ENCODE measurements at regions of chr2 and their contacts with region 1.

Region 1: DNA sequence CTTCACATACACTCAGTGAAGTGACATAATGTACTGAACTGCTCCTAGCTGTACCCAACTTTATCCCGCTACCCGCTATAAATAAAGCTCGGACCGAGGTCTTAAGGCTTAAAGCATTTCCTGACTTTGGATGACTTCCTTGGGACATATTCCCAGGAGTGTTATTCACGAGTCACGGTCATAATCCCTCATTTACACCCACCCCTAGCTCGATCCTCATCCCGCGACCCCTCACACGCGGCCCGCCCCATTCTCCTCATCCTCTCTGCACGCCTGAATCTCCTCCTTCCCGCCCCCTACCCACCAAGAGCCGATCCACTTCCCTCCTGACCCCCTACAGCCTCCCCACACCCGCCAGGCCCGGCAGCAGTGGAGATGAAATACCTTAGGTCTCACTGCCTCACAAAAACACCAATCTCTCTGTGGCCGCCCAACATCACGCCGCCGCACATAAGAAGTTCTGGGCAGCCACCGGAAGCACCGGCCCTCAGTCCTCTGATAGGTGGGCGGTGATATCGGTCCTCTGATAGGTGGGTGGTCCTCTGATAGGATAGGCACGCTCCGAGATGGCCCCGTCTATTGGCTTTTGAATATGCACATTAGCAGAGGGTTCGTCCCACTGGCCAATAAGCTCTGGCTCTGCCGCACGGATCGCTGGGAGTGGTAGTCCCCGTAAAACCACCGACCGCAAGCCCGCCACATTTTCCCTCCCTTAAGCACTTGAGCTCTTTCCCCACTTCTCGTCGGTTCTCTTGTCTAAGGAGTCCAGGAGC is at the start of gene WDCP:
- DNase-seq: peak; percentile 95 to 97
- ATAC-seq: peak; percentile 98
- H3K4me3 ChIP-seq: peak within 1 kb of the TSS; percentile 55 to 62
- H3K27ac ChIP-seq: peak within 1 kb of the TSS in 1 of 2 donors; percentile 69
- H3K4me1 ChIP-seq: no peaks in the 10 kb centered on the region
- H3K27me3 ChIP-seq: no peaks in the 10 kb centered on the region
- total RNA-seq, gene WDCP: 8.3 to 11.2 TPM

Region 2: GRCh38 chr2:22340716-22341115 is 1706.4 kb before region 1 on chr2:
- intact Hi-C with region 1: no loop called
- DNase-seq: no peak
- ATAC-seq: no peak
- H3K4me3 ChIP-seq: no peak overlapping the region
- H3K27ac ChIP-seq: no peak overlapping the region
- H3K4me1 ChIP-seq: no peaks in the 10 kb centered on the region
- H3K27me3 ChIP-seq: no peaks in the 10 kb centered on the region

Region 3: DNA sequence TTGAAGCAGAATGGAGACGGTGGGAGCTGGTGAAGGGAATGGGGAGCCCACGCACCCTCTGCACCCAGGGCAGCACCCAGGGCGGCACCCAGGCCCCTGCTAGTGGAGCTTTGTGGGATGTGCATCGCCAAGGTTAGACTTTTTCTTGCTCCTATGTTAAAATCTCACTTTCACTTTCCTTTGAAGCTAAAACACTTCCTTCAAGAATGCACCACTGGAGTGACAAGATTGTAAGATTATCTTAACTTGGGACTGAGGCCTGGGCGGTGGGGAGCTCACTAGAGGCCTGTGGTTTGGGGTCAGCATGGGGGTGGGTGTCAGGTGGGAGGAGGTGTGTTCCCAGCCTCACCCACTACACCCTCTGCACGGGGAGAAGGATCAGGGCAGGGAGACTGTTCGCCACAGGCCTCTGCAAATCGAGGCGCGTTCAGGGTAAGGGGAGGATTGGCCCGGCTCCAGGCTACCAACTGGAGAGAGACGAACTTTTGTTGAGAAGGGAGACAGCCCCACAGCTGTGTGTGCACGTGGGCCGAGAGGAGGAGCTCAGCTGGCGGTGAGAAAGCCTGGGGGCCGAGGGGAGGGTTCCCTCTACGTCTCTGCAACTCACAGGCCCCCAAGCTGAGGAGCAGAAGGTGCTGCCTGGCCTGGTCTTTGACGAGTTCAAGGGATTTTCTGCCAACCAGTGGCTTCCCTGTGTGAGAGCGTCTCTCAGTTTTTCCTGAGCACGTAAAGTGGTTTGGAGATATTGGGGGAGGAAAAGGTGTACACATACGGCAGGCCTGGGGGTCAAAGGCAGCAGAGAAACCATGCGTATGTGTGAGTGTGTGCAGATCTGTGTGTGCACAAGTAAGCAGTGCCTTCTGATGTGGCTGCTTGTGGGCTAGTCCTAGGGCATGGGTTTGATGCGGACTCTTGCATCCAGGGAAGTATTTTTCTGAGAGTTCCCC is 514.5 kb before region 1 on chr2:
- intact Hi-C with region 1: no loop called
- DNase-seq: no peak
- ATAC-seq: no peak
- H3K4me3 ChIP-seq: no peak overlapping the region
- H3K27ac ChIP-seq: no peak overlapping the region
- H3K4me1 ChIP-seq: no peaks in the 10 kb centered on the region
- H3K27me3 ChIP-seq: no peaks in the 10 kb centered on the region

Region 4: DNA sequence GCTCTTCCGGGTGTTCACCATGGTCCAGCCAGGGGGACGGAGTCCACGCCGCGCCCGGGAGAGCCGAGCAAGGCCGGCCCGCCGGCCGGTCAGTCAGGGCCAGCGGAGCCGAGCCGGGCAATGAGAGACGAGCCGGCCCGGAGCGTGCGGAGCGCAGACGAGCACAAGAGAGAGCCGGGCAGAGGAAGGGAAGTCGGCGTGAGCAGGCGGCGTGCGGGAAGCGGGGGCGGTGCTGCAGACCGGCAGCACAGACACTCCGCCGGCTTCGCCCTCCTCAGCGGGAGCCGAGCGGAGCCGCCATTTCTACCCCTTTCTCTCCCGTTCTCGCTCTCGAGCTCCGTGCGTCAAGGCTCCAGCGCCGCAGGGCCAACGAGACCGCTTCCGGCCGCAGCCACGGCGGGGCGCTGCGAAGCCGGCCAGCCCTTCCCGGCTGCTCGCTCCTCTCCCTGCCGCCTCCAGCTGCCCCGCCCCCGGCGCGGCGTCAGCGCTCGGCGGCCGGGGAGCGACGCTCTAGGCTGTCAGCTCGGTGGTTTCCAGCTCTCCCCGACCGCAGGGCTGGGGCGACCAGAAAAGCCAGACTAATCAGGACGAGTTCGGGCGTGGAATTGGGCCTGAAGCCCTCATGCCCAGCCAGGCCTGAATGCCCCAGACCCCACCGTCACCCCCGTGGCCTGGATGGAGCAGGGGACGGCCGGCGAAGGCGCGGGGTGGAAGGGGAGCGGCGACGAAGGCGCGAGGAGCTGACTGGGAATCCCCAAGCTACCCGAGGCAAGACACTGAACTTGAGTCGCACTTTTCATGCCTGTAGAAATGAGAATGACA is 120.2 kb before region 1 on chr2 and contains the start of gene ATAD2B:
- intact Hi-C with region 1: loop called (anchors 10 kb)
- DNase-seq: peak; percentile 93 to 97
- ATAC-seq: peak; percentile 98
- H3K4me3 ChIP-seq: peak within 1 kb of the TSS; percentile 86 to 92
- H3K27ac ChIP-seq: peak within 1 kb of the TSS; percentile 91 to 97
- H3K4me1 ChIP-seq: no peaks in the 10 kb centered on the region
- H3K27me3 ChIP-seq: no peaks in the 10 kb centered on the region
- total RNA-seq, gene ATAD2B: 33.4 to 45.8 TPM

Region 5: DNA sequence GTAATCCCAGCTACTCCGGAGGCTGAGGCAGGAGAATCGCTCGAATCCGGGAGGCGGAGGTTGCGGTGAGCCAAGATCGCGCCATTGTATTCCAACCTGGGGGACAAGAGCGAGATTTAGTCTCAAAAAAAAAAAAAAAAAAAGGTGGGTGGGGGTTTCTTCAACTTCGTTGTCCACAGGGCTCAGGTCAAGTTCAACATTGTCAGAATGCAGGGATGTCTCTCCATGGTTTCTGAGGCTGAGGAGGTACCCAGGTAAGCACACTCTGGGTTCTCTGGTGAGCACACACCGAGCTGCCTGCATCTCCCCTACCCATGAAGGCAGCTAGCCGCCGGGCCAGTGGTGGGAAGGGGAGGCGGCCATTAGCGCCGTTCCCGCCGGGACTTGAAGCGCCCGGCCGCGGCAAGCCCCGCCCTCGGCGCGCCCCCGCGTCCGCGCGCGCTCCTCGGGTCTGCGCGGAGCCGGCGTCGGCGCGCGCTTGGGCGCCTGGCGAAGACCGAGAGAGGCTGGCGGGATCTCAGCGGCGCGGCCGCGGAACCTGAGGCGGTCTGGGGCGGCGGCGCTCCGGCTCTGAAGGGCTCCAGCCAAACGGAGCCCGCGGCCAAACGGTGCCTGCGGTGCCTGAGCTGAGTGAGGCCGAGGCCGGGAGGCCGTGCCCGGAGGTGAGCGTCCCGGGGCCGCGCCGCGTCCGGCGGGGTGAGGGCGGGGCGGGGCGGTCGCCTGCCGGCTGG is 107.0 kb before region 1 on chr2 and contains the start of gene UBXN2A:
- intact Hi-C with region 1: loop called in 1 of 2 experiments (anchors 5 kb)
- DNase-seq: peak; percentile 86 to 92
- ATAC-seq: peak; percentile 96
- H3K4me3 ChIP-seq: peak within 1 kb of the TSS; percentile 63 to 83
- H3K27ac ChIP-seq: peak within 1 kb of the TSS; percentile 45 to 86
- H3K4me1 ChIP-seq: no peaks in the 10 kb centered on the region
- H3K27me3 ChIP-seq: no peaks in the 10 kb centered on the region
- total RNA-seq, gene UBXN2A: 16.8 to 19.5 TPM

Region 6: GRCh38 chr2:24075915-24076848 is 29.1 kb after region 1 on chr2 and contains the start of gene SF3B6:
- intact Hi-C with region 1: loop called in 1 of 2 experiments (anchors 2 kb)
- DNase-seq: peak; percentile 99
- ATAC-seq: peak; percentile 97
- H3K4me3 ChIP-seq: peak within 1 kb of the TSS; percentile 65 to 94
- H3K27ac ChIP-seq: peak within 1 kb of the TSS; percentile 20 to 90
- H3K4me1 ChIP-seq: no peaks in the 10 kb centered on the region
- H3K27me3 ChIP-seq: no peaks in the 10 kb centered on the region
- total RNA-seq, gene SF3B6: 54.4 to 60.5 TPM

Region 7: GRCh38 chr2:24084386-24085361 is 37.6 kb after region 1 on chr2 and contains the start of gene TP53I3:
- intact Hi-C with region 1: loop called in 1 of 2 experiments (anchors 2 kb)
- DNase-seq: peak; percentile 92 to 96
- ATAC-seq: peak; percentile 98
- H3K4me3 ChIP-seq: peak within 1 kb of the TSS; percentile 29 to 42
- H3K27ac ChIP-seq: peak within 1 kb of the TSS; percentile 46 to 47
- H3K4me1 ChIP-seq: no peaks in the 10 kb centered on the region
- H3K27me3 ChIP-seq: no peaks in the 10 kb centered on the region
- total RNA-seq, gene TP53I3: 7.3 to 21.0 TPM